Activated B cell treated with CpG ODN at 0.5 μM for 24 hours (primary cell): ENCODE measurements at regions of chr2 and their contacts with region 1.

Region 1: DNA sequence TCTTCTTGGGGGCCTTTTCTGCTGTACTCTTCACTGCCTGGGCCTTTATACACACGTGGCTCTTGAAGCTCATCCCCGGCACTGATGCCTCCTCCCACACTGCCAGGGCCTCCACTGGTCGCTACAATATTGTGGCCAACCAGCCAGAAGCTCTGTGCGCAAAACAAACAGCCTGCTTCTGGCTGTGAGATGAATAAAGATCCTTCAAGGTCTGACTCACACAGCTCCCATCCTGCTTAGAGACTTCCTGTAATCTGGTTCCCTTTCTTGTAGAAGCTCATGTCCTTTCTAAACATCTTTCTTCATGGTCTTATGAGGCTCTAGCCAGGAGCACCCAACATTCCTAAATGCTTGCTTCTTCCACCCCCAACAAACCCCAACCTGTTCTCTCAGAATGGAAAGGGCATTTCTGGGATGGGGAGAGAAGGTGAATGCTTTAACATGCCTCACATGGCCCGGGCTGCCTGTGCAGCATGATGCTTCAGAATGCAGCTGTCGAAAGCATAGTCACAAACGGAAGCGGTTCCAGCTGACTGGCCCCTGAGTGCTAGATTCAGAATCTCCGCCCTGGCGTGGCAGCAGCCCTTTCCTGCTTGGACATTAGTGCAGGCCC is 24.6 kb downstream of the NRP2 start:
- DNase-seq: peak; percentile 60
- ATAC-seq: peak; percentile 95
- H3K4me3 Mint-ChIP-seq: peak overlapping the region; percentile 65
- H3K27ac Mint-ChIP-seq: peak overlapping the region; percentile 99
- H3K4me1 Mint-ChIP-seq: peaks cover 63% of the 10 kb centered on the region
- H3K27me3 Mint-ChIP-seq: no peaks in the 10 kb centered on the region
- CTCF ChIP-seq: no peak

Region 2: DNA sequence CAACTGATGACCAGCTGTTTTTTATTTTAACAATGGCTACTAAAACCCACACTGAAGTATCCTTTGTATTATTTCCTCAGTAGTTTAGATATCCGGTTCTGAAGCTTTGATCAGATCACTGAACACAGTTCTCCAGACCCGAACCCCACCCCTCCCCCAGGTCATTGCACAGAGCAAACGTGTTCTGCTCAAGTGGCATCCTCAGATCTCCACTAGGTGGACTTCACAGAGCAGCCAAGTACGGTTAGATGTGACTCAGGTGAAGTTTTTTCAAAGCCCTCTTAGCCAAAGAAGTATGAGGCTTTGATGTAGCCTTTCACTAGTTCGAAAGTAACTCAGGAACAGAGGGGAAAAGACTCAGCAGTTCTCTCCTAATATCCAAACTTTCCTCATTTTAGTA is 167.3 kb before region 1 on chr2:
- CTCF ChIA-PET with region 1: no interaction called
- POLR2A ChIA-PET with region 1: no interaction called
- intact Hi-C with region 1: no loop called
- DNase-seq: no peak
- ATAC-seq: no peak
- H3K4me3 Mint-ChIP-seq: no peak overlapping the region
- H3K27ac Mint-ChIP-seq: no peak overlapping the region
- H3K4me1 Mint-ChIP-seq: peaks cover 21% of the 10 kb centered on the region
- H3K27me3 Mint-ChIP-seq: no peaks in the 10 kb centered on the region
- CTCF ChIP-seq: no peak

Region 3: DNA sequence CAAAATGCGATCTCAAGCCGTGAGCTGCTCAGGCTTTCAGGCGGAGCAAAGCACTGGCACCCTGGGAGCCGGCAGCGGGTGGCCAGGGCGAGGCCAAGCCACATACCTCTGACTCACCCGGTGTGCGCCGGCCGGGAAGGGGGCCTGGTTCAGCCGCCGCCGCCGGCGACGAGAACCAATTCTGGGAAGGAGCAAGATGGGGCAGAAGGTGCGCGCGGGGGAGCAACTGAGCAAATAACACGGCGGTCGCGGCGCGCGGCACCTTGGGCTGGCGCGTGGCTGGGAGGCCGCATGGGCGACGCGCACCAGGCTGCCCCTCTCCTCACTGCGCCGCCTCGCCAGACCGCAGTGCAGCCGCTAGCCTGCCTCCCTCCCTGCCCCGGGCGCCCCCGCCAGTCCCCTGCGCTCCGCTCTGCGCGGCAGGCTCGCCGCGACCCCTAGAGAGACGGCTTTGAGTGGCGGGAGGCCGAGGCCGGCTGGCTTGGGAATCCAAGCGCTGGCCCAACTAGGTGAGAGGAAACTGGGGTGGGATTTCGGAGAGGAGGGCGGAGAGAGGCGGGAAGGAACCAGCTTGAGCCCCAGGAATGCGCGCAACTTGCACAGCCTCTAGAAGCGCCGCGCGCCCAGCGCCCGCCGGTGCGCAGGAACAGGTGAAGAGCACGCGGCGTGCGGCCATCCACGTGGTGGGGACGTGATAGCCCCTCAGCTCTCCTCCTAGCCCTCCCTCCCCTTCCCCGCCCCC is 21.4 kb before region 1 on chr2:
- CTCF ChIA-PET with region 1: interaction called, 16 read pairs
- POLR2A ChIA-PET with region 1: interaction called, 72 read pairs
- intact Hi-C with region 1: loop called (anchors 1 kb)
- DNase-seq: peak; percentile 29
- ATAC-seq: no peak
- H3K4me3 Mint-ChIP-seq: peak overlapping the region; percentile 90
- H3K27ac Mint-ChIP-seq: peak overlapping the region; percentile 61
- H3K4me1 Mint-ChIP-seq: peaks cover 53% of the 10 kb centered on the region
- H3K27me3 Mint-ChIP-seq: peaks cover 37% of the 10 kb centered on the region
- CTCF ChIP-seq: no peak

Region 4: GRCh38 chr2:205721057-205721449 is 14.2 kb after region 1 on chr2:
- CTCF ChIA-PET with region 1: interaction called, 12 read pairs
- POLR2A ChIA-PET with region 1: interaction called, 21 read pairs
- intact Hi-C with region 1: loop called (anchors 1 kb)
- DNase-seq: no peak
- ATAC-seq: no peak
- H3K4me3 Mint-ChIP-seq: no peak overlapping the region
- H3K27ac Mint-ChIP-seq: no peak overlapping the region
- H3K4me1 Mint-ChIP-seq: peaks cover 27% of the 10 kb centered on the region
- H3K27me3 Mint-ChIP-seq: no peaks in the 10 kb centered on the region
- CTCF ChIP-seq: no peak

Region 5: GRCh38 chr2:205800773-205801172 is 93.9 kb after region 1 on chr2:
- CTCF ChIA-PET with region 1: no interaction called
- POLR2A ChIA-PET with region 1: no interaction called
- intact Hi-C with region 1: no loop called
- DNase-seq: no peak
- ATAC-seq: no peak
- H3K4me3 Mint-ChIP-seq: no peak overlapping the region
- H3K27ac Mint-ChIP-seq: no peak overlapping the region
- H3K4me1 Mint-ChIP-seq: no peaks in the 10 kb centered on the region
- H3K27me3 Mint-ChIP-seq: peaks cover 16% of the 10 kb centered on the region
- CTCF ChIP-seq: no peak

Region 6: GRCh38 chr2:206556357-206556949 is 849.6 kb after region 1 on chr2:
- CTCF ChIA-PET with region 1: no interaction called
- POLR2A ChIA-PET with region 1: no interaction called
- intact Hi-C with region 1: no loop called
- DNase-seq: no peak
- ATAC-seq: no peak
- H3K4me3 Mint-ChIP-seq: no peak overlapping the region
- H3K27ac Mint-ChIP-seq: no peak overlapping the region
- H3K4me1 Mint-ChIP-seq: no peaks in the 10 kb centered on the region
- H3K27me3 Mint-ChIP-seq: no peaks in the 10 kb centered on the region
- CTCF ChIP-seq: no peak